ENCODE measurements at regions of chr5 and their contacts with region 1.

Region 1: DNA sequence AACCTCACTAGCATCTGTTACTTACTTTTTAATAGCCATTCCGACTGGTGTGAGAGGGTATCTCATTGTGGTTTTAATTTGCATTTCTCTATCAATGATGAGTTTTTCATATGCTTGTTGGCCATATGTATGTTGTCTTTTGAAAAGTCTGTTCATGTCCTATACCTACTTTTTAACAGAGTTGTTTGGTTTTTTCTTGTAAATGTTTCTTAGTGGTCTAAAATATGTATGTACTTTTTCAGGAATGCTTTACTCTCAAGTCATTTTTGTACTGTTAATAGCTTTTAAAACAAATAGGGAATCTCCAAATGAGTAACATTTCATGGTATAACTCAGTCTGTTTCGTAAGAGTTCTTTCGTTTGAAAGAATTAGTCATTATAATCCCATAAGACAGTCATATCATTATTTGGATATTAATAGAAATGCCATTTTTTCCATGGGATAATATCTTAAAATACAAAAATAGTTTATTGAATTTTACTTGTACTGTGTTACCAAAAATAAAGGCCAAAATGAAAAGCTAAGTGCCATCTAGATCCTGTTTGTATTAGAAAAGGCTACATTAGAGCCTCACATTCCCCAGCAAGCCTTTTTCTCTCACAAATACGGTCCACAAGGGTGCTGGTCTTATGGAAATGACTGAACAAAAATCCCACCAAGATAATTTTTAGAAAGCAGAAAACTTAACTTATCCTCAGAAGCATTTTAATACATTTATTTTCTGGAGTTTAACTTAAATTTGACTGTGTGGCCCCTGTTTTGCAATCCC is 247.7 kb downstream of the PJA2 start:
- DNase-seq: no peak
- H3K4me3 ChIP-seq: no peak overlapping the region
- H3K27ac ChIP-seq: no peak overlapping the region
- H3K4me1 ChIP-seq: no peaks in the 10 kb centered on the region
- H3K27me3 ChIP-seq: no peaks in the 10 kb centered on the region
- CTCF ChIP-seq: no peak

Region 2: DNA sequence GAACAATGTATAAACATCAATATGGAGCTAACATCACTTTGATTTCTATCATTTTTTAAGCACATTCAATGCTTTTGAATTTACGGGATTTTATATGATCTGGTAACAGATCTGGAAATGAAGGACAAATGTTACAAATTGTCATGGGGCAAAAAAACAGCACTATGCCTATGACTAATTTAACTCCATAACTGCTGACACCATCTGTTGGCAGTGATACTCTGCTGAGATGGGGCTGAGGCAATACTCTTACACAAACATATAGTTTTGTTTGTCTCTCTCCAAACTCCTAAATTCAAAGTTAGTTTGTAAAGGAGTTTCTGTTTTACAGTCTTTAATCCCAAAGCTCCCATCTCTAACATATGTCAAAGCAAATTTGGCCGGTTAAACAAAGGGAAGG is 546.9 kb before region 1 on chr5:
- CTCF ChIA-PET with region 1: no interaction called
- POLR2A ChIA-PET with region 1: no interaction called
- intact Hi-C with region 1: no loop called
- DNase-seq: no peak
- H3K4me3 ChIP-seq: no peak overlapping the region
- H3K27ac ChIP-seq: no peak overlapping the region
- H3K4me1 ChIP-seq: no peaks in the 10 kb centered on the region
- H3K27me3 ChIP-seq: no peaks in the 10 kb centered on the region
- CTCF ChIP-seq: no peak

Region 3: GRCh38 chr5:109016300-109016699 is 145.8 kb before region 1 on chr5:
- CTCF ChIA-PET with region 1: no interaction called
- POLR2A ChIA-PET with region 1: no interaction called
- intact Hi-C with region 1: loop called (anchors 10 kb)
- DNase-seq: no peak
- H3K4me3 ChIP-seq: no peak overlapping the region
- H3K27ac ChIP-seq: no peak overlapping the region
- H3K4me1 ChIP-seq: no peaks in the 10 kb centered on the region
- H3K27me3 ChIP-seq: no peaks in the 10 kb centered on the region
- CTCF ChIP-seq: no peak

Region 4: GRCh38 chr5:109145139-109145538 is 17.0 kb before region 1 on chr5:
- CTCF ChIA-PET with region 1: no interaction called
- POLR2A ChIA-PET with region 1: interaction called, 10 read pairs
- intact Hi-C with region 1: no loop called
- DNase-seq: no peak
- H3K4me3 ChIP-seq: no peak overlapping the region
- H3K27ac ChIP-seq: no peak overlapping the region
- H3K4me1 ChIP-seq: no peaks in the 10 kb centered on the region
- H3K27me3 ChIP-seq: no peaks in the 10 kb centered on the region
- CTCF ChIP-seq: no peak

Region 5: DNA sequence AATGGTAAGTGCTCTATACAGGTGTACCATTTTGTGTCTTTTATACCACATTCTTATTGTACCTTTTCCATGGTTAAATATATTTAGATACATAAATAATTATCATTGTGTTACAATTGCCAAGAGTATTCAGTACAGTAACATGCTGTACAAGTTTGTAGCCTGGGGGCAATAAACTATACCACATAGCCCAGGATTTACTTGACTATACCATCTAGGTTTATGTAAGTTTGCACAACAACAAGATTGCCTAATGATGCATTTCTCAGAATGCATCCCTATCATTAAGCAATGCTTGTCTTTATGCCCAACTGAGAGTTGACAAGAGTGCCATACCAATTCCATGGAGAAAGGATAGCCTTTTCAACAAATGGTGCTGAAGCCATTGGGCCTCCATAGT is 384.4 kb after region 1 on chr5:
- CTCF ChIA-PET with region 1: no interaction called
- POLR2A ChIA-PET with region 1: no interaction called
- intact Hi-C with region 1: no loop called
- DNase-seq: no peak
- H3K4me3 ChIP-seq: no peak overlapping the region
- H3K27ac ChIP-seq: no peak overlapping the region
- H3K4me1 ChIP-seq: no peaks in the 10 kb centered on the region
- H3K27me3 ChIP-seq: no peaks in the 10 kb centered on the region; the same call in 1 of the 2 replicates
- CTCF ChIP-seq: no peak

Region 6: GRCh38 chr5:110478895-110479294 is 1316.8 kb after region 1 on chr5:
- CTCF ChIA-PET with region 1: no interaction called
- POLR2A ChIA-PET with region 1: interaction called, 25 read pairs
- intact Hi-C with region 1: no loop called
- DNase-seq: peak in 1 of 2 experiments; percentile 74
- H3K4me3 ChIP-seq: no peak overlapping the region
- H3K27ac ChIP-seq: no peak overlapping the region
- H3K4me1 ChIP-seq: peaks cover 14% of the 10 kb centered on the region
- H3K27me3 ChIP-seq: no peaks in the 10 kb centered on the region
- CTCF ChIP-seq: no peak

Measured in PC-9 (cell line).